Tibial artery (tissue), 4 donors: ENCODE measurements at regions of chr11 and their contacts with region 1.

Region 1: DNA sequence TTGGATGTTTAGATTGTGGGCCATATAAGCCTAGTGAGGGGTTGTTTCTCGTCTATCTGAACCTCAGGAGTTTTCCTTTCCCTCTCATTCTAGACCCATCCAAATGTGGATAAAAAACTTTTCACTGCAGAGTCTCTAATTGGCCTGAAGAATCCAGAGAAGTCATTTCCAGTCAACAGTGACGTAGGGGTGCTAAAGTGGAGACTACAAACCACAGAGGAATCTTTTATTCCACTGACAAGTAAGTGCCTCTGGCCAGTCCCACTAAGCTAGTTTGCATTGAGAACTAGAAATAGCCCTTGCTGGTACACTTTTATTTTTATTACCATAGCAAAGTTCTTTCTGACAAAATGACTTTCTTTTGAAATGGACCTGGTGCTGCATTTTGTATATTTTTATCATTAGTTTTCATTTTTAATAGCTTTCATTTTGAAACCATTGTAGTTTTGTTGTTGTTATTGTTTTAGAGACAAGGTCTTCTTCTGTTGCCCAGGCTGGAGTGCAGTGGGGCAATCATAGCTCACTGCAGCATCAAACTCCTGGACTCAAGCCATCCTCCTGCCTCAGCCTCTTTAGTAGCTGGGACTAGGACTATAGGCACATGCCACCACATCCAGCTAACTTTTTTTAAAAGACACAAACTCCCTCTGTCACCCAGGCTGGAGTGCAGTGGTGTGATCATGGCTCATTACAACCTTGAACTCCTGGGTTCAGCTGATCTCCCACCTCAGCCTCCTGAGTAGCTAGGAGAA is 14.6 kb upstream of the PHLDB1 start:
- DNase-seq: no peak
- H3K4me3 ChIP-seq: no peak overlapping the region
- H3K27ac ChIP-seq: peak overlapping the region; percentile 61 to 62
- H3K4me1 ChIP-seq: peaks cover 0 to 39% (median 21%) of the 10 kb centered on the region in 4 donors
- H3K27me3 ChIP-seq: no peaks in the 10 kb centered on the region
- CTCF ChIP-seq: no peak

Region 2: DNA sequence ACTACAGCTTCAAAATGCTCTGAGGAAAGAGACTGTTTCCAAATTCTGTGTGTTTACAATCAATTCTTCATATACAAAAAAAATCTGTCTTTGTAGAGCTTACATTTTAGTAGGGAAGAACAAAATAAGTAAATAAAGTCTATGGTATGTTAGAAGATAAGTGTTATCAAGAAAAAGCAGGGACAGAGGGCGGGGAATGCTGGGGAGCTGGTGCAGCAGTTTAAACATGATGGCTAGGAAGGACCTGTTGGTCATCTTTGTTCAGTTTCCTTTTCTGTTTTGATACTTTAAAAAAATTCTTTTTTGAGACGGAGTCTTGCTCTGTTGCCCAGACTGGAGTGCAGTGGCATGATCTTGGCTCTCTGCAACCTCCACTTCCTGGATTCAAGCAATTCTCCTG is 45.7 kb before region 1 on chr11:
- intact Hi-C with region 1: no loop called
- DNase-seq: peak in 1 of 2 donors; percentile 15
- H3K4me3 ChIP-seq: no peak overlapping the region
- H3K27ac ChIP-seq: no peak overlapping the region
- H3K4me1 ChIP-seq: no peaks in the 10 kb centered on the region
- H3K27me3 ChIP-seq: no peaks in the 10 kb centered on the region
- CTCF ChIP-seq: no peak

Region 3: GRCh38 chr11:118610804-118611795 is 18.3 kb after region 1 on chr11:
- intact Hi-C with region 1: loop called (anchors 2 kb)
- DNase-seq: peak; percentile 83 to 89
- H3K4me3 ChIP-seq: peak overlapping the region; percentile 70 to 85
- H3K27ac ChIP-seq: peak overlapping the region; percentile 93
- H3K4me1 ChIP-seq: peaks cover 0 to 50% (median 42%) of the 10 kb centered on the region in 4 donors
- H3K27me3 ChIP-seq: no peaks in the 10 kb centered on the region
- CTCF ChIP-seq: peak; percentile 66 to 83

Region 4: GRCh38 chr11:118659314-118659952 is 66.6 kb after region 1 on chr11:
- intact Hi-C with region 1: loop called (anchors 5 kb)
- DNase-seq: peak; percentile 94 to 95
- H3K4me3 ChIP-seq: no peak overlapping the region
- H3K27ac ChIP-seq: peak overlapping the region; percentile 36 to 63
- H3K4me1 ChIP-seq: peaks cover 0 to 17% (median 8%) of the 10 kb centered on the region in 4 donors
- H3K27me3 ChIP-seq: peaks cover 0 to 7% of the 10 kb centered on the region in 2 donors
- CTCF ChIP-seq: peak; percentile 98 to 99

Region 5: GRCh38 chr11:119057000-119057769 is 464.4 kb after region 1 on chr11 and contains the start of gene HYOU1:
- intact Hi-C with region 1: no loop called
- DNase-seq: peak; percentile 99
- H3K4me3 ChIP-seq: peak within 1 kb of the TSS; percentile 88 to 99
- H3K27ac ChIP-seq: peak within 1 kb of the TSS; percentile 87 to 93
- H3K4me1 ChIP-seq: peaks cover 0 to 23% (median 21%) of the 10 kb centered on the region in 4 donors
- H3K27me3 ChIP-seq: no peaks in the 10 kb centered on the region
- CTCF ChIP-seq: peak in 1 of 2 experiments; percentile 14

Region 6: DNA sequence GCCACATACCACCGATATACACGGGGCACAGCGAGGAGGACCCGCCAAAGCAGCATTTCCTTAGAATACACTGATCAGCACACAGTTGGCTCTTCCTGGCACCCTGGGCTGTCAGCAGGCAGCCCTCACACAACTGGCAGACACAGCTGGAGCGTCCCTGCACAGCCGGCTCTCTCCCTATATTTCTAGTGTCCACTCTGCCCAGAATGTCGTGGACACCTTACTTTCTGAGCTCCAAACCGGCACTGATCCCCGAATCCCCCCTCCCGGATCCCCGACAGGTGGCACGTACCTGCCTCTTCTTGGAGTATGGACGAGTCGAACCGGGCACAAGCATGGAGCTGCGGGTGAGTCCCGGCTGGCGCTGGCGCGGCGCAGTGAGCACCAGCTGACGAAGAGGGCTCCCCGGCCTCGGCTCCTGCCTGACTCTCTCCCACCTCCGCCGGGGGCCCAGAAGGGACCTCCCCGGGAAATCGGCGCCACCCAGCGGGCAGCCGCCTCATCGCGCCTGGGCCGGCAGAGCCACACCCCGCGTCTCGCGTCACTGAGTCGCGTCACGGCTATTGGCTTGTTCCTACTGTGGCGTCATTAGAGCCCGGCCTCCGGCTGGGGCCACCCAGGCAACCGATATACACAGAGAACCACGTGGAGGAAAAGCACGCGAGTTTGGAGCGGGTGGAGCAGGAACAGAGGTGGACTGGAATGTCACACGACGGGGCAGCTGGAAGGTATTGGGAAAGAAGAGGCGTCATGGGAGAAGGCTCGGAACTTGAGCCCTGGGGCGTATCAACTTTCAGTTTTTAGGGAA is 788.6 kb after region 1 on chr11 and contains the start of gene USP2:
- intact Hi-C with region 1: no loop called
- DNase-seq: peak; percentile 97 to 98
- H3K4me3 ChIP-seq: peak within 1 kb of the TSS; percentile 46 to 59
- H3K27ac ChIP-seq: peak within 1 kb of the TSS; percentile 63 to 66
- H3K4me1 ChIP-seq: peaks cover 0 to 28% (median 23%) of the 10 kb centered on the region in 4 donors
- H3K27me3 ChIP-seq: no peaks in the 10 kb centered on the region
- CTCF ChIP-seq: peak; percentile 88 to 89